ENCODE measurements at regions of chr11 and their contacts with region 1.

Region 1: DNA sequence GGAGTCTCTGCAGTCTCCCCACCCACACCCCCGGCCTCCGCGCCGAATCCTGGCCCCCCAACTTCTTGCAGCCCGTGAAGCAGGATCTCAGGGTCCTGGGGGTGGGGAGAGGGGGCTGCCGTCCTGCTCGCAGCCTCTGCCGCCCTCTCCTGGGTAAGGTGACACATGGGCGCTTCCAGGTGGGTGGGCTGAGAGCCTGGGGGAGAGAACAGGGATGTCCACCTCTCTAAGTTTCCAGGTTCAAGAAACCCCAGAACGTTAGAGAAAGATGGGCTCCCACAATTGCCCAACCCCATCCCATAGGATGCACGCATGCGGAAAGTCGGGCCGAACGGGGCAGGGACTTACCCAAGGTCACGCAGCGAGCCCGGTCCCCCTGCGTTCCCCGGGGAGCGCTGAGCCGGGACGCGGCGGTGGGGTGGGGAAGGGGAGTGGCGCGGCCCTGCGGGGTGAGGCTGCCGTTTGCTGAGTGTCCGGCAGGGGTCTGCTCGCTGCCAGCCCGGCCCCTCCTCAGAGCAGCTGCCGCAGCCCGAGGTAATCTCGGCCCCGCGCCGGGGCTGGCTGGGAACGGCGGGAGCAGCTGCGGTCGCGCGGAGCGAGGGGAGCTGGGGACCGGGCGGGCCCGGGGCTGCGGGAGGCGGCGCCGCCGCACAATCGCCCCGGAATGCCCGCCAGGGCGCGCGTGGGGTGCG is 705 bp upstream of the CAPN1 start:
- DNase-seq: peak; percentile 76 to 77
- ATAC-seq: peak; percentile 83 to 85
- H3K4me3 ChIP-seq: peak overlapping the region; percentile 97
- H3K27ac ChIP-seq: peak overlapping the region; percentile 99
- H3K4me1 ChIP-seq: peaks cover 17% of the 10 kb centered on the region; the same call in 2 of the 3 replicates
- CTCF ChIP-seq: peak; percentile 52
- EP300 ChIP-seq: no peak
- POLR2A ChIP-seq: no peak
- RAD21 ChIP-seq: peak; percentile 63 to 75

Region 2: DNA sequence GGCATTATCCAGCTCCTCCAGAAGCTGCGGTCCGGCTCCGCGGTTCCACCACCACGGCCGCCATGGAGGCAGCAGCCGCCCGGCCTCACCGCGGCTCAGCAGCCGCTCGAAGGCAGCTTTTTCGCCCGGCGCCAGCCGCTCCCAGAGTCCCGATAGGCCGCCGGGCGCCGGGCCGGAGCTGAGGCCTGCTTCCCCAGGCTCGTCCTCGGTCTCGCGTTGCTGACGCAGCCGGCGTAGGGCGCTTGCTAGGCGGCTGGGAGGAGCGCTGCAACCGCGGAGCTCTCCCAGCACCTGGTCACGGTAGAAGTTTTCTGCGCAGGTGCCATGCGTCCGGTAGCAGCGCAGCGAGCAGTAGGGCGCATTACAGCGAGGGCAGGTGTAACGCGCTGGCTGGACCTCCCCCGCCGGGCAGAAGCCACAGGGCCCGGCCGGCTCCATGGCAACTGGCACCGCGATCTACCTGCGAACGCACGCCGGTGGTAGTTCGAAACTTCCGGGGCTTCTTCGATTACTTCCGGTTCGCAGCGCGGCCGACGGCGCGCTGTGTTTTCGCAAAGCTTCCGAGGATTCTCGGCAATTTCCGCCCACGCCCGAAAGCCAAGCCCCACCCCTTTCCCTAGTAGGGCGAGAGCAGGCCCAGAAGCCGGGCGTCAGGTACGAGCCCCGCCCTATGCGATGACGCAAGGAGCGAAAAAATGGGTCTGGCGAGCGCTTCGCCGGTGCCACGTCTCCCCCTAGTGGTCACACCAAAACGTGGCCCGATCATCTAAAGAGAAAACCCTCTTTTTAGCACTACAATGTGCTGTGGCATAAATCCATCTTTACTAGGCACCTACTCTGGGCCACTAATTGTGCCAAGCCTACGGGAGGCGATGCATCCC is 63.6 kb before region 1 on chr11 and contains the start of gene ZNHIT2:
- CTCF ChIA-PET with region 1: interaction called, 19 read pairs
- POLR2A ChIA-PET with region 1: interaction called, 20 read pairs
- DNase-seq: peak; percentile 82 to 98
- ATAC-seq: peak; percentile 55 to 74
- H3K4me3 ChIP-seq: peak within 1 kb of the TSS; percentile 86
- H3K27ac ChIP-seq: peak within 1 kb of the TSS; percentile 93
- H3K4me1 ChIP-seq: peaks cover 34% of the 10 kb centered on the region; the same call in 2 of the 3 replicates
- CTCF ChIP-seq: peak; percentile 88
- EP300 ChIP-seq: no peak
- POLR2A ChIP-seq: peak; percentile 82
- RAD21 ChIP-seq: peak; percentile 80 to 83
- polyA plus RNA-seq, gene ZNHIT2: 5.5 and 6.0 TPM in 2 replicates

Region 3: DNA sequence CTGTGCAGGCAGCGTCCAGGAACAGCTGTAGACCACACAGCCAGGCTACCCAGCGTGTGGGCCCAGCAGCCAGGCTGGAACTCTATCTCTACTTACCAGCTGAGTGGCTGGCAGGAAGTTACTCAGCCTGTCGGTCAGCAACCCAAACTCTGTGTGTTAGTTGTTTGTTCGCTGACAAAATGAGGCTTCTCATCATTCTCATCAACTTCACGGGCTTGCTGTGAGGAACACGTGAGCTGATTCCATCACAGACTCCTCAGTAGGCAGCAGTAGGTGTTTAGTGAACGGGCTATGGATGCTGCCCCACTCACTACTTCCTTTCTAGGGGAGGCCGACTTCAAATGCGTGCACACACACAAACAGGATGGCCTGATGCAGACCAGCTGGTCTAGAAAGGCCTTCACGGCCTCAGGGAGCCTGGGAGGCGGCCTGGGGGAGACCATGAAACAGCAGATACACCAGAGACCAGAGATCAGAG is 11.8 kb before region 1 on chr11:
- CTCF ChIA-PET with region 1: interaction called, 15 read pairs
- POLR2A ChIA-PET with region 1: interaction called, 5 read pairs
- DNase-seq: no peak
- ATAC-seq: peak in 1 of 2 experiments; percentile 18; a peak in 3 of 6 replicates
- H3K4me3 ChIP-seq: no peak overlapping the region
- H3K27ac ChIP-seq: no peak overlapping the region
- H3K4me1 ChIP-seq: 0 out of 3 replicates have a peak, but pooled peaks cover 4% of the 10 kb centered on the region
- CTCF ChIP-seq: no peak
- EP300 ChIP-seq: no peak
- POLR2A ChIP-seq: no peak
- RAD21 ChIP-seq: no peak

Measured in A549 (cell line).